Heart left ventricle (tissue), 16 donors: ENCODE measurements at regions of chr1 and their contacts with region 1.

Region 1: DNA sequence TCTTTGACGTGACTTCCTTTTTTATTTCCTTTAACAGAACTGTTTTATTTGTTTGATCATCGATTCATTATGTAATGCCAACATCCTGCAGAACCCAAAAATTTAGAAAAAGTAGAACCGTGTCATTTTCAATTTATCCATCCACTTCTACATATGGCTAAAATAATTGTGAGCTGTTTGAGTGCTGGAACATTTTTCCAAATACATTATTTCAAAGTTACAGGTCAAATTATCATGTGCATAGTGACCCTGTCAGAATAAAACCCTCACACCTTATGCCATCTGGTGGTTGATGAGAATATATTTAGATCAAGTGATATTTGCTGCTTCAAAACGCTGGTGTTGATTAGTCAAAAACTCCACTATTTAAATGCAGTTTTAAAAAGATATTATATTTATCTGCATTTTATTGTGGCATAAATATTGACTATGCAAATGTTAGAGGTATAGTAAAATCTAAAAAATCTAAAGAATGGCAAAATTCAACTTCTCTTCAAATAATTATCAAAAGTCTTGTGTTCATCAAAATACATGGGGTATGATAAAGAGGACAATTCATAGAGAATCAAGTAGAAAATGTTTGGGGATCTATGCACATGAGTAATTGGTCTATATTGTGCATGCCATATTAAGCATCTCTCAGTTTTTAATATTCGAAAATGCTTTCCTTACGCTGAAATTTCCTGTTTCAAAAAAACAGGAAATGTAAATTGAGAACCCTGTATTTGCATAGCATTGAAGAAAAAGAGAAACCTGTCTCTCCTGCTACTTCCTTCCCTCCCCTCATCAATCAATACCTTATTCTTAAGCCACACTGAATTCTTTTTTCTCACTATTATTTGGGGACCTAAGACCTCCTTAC is 39.7 kb downstream of the UBE2U start:
- DNase-seq: no peak
- ATAC-seq: peak in 1 of 4 donors; percentile 49
- H3K4me3 ChIP-seq: no peak overlapping the region
- H3K27ac ChIP-seq: no peak overlapping the region
- H3K4me1 ChIP-seq: peaks cover 0 to 16% (median 3%) of the 10 kb centered on the region in 12 donors
- H3K27me3 ChIP-seq: no peaks in the 10 kb centered on the region
- CTCF ChIP-seq: peak; percentile 13 to 58 (median 42)
- POLR2A ChIP-seq: no peak

Region 2: DNA sequence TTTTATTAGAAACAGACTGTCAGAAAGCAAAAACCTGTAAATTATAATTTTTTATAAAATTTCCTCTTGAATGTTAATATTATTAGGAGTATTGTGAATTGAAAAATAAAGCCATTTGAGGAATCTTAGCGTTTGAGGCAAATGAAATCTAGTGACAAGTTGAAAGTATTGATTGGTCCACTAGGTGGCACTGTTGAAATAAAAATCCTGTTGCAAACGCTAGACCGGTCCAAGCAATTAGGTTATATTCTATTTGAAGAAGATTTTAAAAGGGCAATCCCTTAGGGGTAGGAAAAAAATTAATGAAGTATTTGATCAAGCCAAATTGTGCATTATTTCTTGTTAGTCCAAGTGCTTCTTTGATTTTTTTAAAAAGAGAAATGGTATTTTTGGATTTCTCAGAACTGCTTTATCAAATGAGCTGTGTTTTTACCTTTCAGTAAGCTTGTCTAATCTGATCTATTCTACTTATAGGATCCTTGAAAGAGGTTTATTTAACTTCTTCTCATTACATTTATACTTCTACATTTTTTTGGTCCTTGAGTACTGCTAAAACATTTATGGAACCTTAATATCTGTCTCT is 1401.4 kb before region 1 on chr1:
- intact Hi-C with region 1: loop called in 1 of 10 experiments (anchors 5 kb)
- DNase-seq: peak in 2 of 5 donors; percentile 10 to 19
- ATAC-seq: peak in 2 of 4 donors; percentile 62 to 68
- H3K4me3 ChIP-seq: no peak overlapping the region
- H3K27ac ChIP-seq: no peak overlapping the region
- H3K4me1 ChIP-seq: peaks cover 0 to 11% (median 0%) of the 10 kb centered on the region in 12 donors
- H3K27me3 ChIP-seq: no peaks in the 10 kb centered on the region
- CTCF ChIP-seq: peak; percentile 65 to 80 (median 72)
- POLR2A ChIP-seq: no peak

Region 3: GRCh38 chr1:63557365-63557987 is 685.6 kb before region 1 on chr1:
- intact Hi-C with region 1: loop called in 1 of 10 experiments (anchors 5 kb)
- DNase-seq: no peak
- ATAC-seq: no peak
- H3K4me3 ChIP-seq: no peak overlapping the region
- H3K27ac ChIP-seq: no peak overlapping the region
- H3K4me1 ChIP-seq: no peaks in the 10 kb centered on the region
- H3K27me3 ChIP-seq: no peaks in the 10 kb centered on the region
- CTCF ChIP-seq: peak in 11 of 12 donors; percentile 26 to 54 (median 43)
- POLR2A ChIP-seq: no peak

Region 4: GRCh38 chr1:63575340-63575826 is 667.7 kb before region 1 on chr1:
- intact Hi-C with region 1: loop called in 4 of 10 experiments (anchors 2 to 10 kb)
- DNase-seq: no peak
- ATAC-seq: peak in 2 of 4 donors; percentile 34 to 54
- H3K4me3 ChIP-seq: no peak overlapping the region
- H3K27ac ChIP-seq: no peak overlapping the region
- H3K4me1 ChIP-seq: peaks cover 0 to 3% (median 0%) of the 10 kb centered on the region in 12 donors
- H3K27me3 ChIP-seq: no peaks in the 10 kb centered on the region
- CTCF ChIP-seq: peak; percentile 67 to 87 (median 80)
- POLR2A ChIP-seq: no peak

Region 5: DNA sequence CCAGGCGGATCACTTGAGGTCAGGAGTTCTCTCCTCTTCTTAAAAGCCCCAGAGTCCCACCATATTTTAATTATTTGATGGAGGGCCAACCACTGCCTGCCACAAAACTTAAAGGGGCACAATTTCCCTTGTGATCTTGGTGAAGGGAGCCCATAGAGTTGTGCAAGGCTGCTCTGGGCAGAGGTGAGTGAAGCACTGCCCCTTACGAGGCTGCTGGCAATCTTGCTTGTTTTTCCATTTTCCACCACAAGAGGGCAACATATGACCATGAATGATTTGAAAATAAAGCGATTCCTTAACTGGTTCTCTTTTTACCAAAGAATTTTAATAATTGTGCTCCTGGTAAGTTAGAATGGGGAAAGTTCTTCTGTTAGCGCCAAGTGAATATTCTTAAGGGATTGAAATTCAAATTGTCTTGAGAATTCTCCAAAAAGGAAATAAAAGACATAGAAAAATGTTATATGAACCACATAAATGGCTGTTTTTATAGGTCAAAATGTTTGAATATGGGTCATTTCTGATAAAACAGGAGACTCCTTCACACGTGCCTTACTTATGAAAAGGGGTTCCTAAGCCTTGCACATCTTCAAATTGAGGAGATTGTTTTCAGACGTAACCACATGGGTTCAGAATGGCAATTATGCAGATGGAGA is 627.2 kb before region 1 on chr1:
- intact Hi-C with region 1: loop called (anchors 1 to 5 kb)
- DNase-seq: peak in 3 of 5 donors; percentile 34 to 51 (median 45)
- ATAC-seq: peak; percentile 31 to 70 (median 60)
- H3K4me3 ChIP-seq: no peak overlapping the region
- H3K27ac ChIP-seq: peak overlapping the region in 2 of 12 donors; percentile 2 to 4
- H3K4me1 ChIP-seq: peaks cover 0 to 32% (median 4%) of the 10 kb centered on the region in 12 donors
- H3K27me3 ChIP-seq: no peaks in the 10 kb centered on the region
- CTCF ChIP-seq: peak; percentile 71 to 89 (median 78)
- POLR2A ChIP-seq: no peak

Region 6: GRCh38 chr1:63624911-63625310 is 618.2 kb before region 1 on chr1:
- intact Hi-C with region 1: loop called in 1 of 10 experiments (anchors 2 kb)
- DNase-seq: no peak
- ATAC-seq: no peak
- H3K4me3 ChIP-seq: no peak overlapping the region
- H3K27ac ChIP-seq: peak overlapping the region in 3 of 12 donors; percentile 10 to 66 (median 48)
- H3K4me1 ChIP-seq: peaks cover 0 to 58% (median 18%) of the 10 kb centered on the region in 12 donors
- H3K27me3 ChIP-seq: no peaks in the 10 kb centered on the region
- CTCF ChIP-seq: no peak
- POLR2A ChIP-seq: no peak

Region 7: GRCh38 chr1:63674238-63674864 is 568.8 kb before region 1 on chr1:
- intact Hi-C with region 1: loop called in 9 of 10 experiments (anchors 2 to 5 kb)
- DNase-seq: peak; percentile 65 to 81 (median 71)
- ATAC-seq: peak; percentile 88 to 96 (median 92)
- H3K4me3 ChIP-seq: no peak overlapping the region
- H3K27ac ChIP-seq: peak overlapping the region in 6 of 12 donors; percentile 31 to 43 (median 37)
- H3K4me1 ChIP-seq: peaks cover 0 to 10% (median 2%) of the 10 kb centered on the region in 12 donors
- H3K27me3 ChIP-seq: no peaks in the 10 kb centered on the region
- CTCF ChIP-seq: peak in 11 of 12 donors; percentile 39 to 73 (median 63)
- POLR2A ChIP-seq: no peak